ENCODE measurements at regions of chr11 and their contacts with region 1.

Region 1: GRCh38 chr11:27158722-27159679 is 118.4 kb downstream of the BBOX1 start:
- DNase-seq: peak; percentile 68
- ATAC-seq: peak; percentile 91

Region 2: GRCh38 chr11:26749927-26750326 is 409.1 kb before region 1 on chr11:
- intact Hi-C with region 1: loop called (anchors 2 kb)
- DNase-seq: no peak
- ATAC-seq: no peak

Region 3: GRCh38 chr11:27300974-27301373 is 142.0 kb after region 1 on chr11:
- intact Hi-C with region 1: no loop called
- DNase-seq: no peak
- ATAC-seq: no peak